Naive thymus-derived CD4-positive, alpha-beta T cell (primary cell): ENCODE measurements at regions of chr6 and their contacts with region 1.

Region 1: GRCh38 chr6:166419286-166419685 is 36.5 kb upstream of the MPC1 start:
- DNase-seq: peak in 2 of 9 donors; percentile 34 to 52
- ATAC-seq: peak; percentile 42
- H3K4me3 ChIP-seq: no peak overlapping the region
- H3K4me3 Mint-ChIP-seq: peak overlapping the region; percentile 4 to 79 (median 57)
- H3K27ac ChIP-seq: peak overlapping the region; percentile 50
- H3K27ac Mint-ChIP-seq: peak overlapping the region; percentile 83 to 99 (median 97)
- H3K4me1 ChIP-seq: peaks cover 63 to 66% of the 10 kb centered on the region in 2 donors
- H3K4me1 Mint-ChIP-seq: peaks cover 52 to 73% (median 64%) of the 10 kb centered on the region in 7 donors
- H3K27me3 ChIP-seq: no peaks in the 10 kb centered on the region
- H3K27me3 Mint-ChIP-seq: peaks cover 0 to 1% (median 0%) of the 10 kb centered on the region in 5 donors

Region 2: DNA sequence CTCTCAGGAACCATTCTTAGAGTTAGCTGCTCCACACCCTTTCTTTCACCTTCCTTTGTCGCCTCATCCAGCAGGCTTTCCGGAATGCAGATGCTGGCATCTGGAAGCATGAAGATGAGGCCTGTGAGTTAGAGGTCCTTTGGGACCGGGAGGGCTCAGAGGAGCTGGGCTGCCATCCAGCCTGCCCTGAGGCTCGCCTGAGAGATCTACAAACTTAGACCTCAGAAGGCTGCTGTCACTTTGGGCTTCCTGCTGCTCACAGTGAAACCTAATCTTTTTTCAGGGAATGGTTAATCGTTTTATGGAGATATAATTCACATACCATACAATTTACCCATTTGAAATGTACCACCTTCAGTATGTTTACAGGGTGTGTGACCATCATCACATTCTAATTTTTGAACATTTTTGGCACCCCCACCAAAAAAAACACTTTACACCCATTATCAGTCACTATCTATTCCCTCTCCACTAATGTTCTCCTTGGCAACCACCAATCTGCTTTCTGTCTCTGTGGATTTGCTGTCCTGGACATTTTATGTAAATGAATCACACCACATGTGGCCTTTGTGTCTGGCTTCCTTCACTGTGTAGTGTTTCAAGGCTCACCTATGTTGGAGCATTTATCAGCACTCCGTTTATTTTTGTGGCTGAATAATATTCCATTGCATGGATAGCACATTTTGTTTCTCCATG is 16.6 kb before region 1 on chr6:
- CTCF ChIA-PET with region 1: interaction called, 7 read pairs
- POLR2A ChIA-PET with region 1: interaction called, 4 read pairs
- intact Hi-C with region 1: loop called in 1 of 2 experiments (anchors 1 kb)
- DNase-seq: no peak
- ATAC-seq: no peak
- H3K4me3 ChIP-seq: no peak overlapping the region
- H3K4me3 Mint-ChIP-seq: no peak overlapping the region
- H3K27ac ChIP-seq: no peak overlapping the region
- H3K27ac Mint-ChIP-seq: peak overlapping the region in 5 of 9 donors; percentile 19 to 77 (median 54)
- H3K4me1 ChIP-seq: peaks cover 4 to 6% of the 10 kb centered on the region in 2 donors
- H3K4me1 Mint-ChIP-seq: peaks cover 0 to 7% (median 4%) of the 10 kb centered on the region in 7 donors
- H3K27me3 ChIP-seq: no peaks in the 10 kb centered on the region
- H3K27me3 Mint-ChIP-seq: peaks cover 0 to 6% (median 4%) of the 10 kb centered on the region in 5 donors

Region 3: DNA sequence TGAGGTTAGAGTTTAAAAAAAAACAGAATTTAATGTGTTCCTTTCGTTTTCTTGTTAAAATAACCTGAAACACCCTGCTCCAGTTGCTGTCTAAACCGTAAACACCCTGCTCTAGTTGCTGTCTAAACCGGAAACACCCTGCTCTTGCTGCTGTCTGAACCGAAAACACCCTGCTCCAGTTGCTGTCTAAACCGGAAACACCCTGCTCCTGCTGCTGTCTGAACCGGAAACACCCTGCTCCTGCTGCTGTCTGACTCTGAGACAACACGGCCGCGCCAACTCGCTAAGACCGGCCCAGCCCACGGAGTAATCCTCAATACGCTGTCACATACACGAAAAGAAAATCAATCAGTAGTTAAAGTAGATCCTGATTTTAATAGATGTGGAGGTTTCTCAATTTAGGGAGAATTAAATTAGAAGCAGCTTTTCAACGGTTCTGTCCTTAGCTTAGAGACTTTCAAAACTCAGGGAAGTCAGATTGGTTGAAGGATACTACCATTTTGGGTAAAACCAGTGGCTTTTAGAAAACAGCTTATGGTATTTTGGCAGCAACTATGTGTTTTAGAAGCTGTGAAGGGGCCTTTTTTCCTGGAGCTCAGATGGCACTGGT is 68.9 kb after region 1 on chr6:
- CTCF ChIA-PET with region 1: no interaction called
- POLR2A ChIA-PET with region 1: interaction called, 11 read pairs
- intact Hi-C with region 1: loop called (anchors 1 kb)
- DNase-seq: peak; percentile 37 to 90 (median 86)
- ATAC-seq: peak; percentile 94
- H3K4me3 ChIP-seq: peak overlapping the region; percentile 20
- H3K4me3 Mint-ChIP-seq: peak overlapping the region; percentile 43 to 84 (median 78)
- H3K27ac ChIP-seq: peak overlapping the region; percentile 79
- H3K27ac Mint-ChIP-seq: peak overlapping the region; percentile 93 to 98 (median 96)
- H3K4me1 ChIP-seq: peaks cover 17 to 18% of the 10 kb centered on the region in 2 donors
- H3K4me1 Mint-ChIP-seq: peaks cover 9 to 35% (median 27%) of the 10 kb centered on the region in 7 donors
- H3K27me3 ChIP-seq: no peaks in the 10 kb centered on the region
- H3K27me3 Mint-ChIP-seq: no peaks in the 10 kb centered on the region

Region 4: DNA sequence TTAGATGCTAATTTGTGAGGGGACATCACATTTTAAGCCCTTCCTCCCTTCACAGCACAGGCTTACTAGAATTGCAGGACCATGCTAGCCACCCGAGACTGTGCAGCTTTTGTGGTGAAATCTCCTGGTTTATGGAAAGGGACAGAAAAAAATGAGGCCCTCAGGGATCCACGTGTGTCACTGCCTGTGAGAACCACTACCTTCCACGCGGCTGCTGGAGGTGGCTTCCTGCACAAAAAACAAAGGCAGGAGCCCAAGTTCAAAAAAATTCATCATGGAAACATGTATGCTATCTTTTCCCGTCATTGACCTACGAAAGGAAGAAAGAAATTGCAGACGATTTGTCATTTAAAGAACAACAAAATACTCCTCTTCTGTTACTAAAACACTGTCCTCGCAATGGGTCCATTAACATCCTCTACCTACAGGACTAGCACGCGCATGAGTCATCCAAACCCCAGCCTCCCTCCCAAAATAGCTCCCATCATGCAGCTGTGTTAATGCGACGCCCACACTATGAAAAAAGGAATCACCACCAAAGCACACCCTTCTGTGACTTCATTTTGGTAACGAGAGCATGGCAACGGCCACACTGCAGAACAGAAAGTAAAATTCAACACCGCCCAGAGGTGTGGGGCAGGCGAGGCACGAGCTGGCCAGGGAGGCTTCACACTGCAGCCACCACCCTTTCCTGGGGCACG is 121.5 kb after region 1 on chr6:
- CTCF ChIA-PET with region 1: no interaction called
- POLR2A ChIA-PET with region 1: no interaction called
- intact Hi-C with region 1: loop called in 1 of 2 experiments (anchors 1 kb)
- DNase-seq: peak in 7 of 9 donors; percentile 3 to 48 (median 25)
- ATAC-seq: peak; percentile 87
- H3K4me3 ChIP-seq: peak overlapping the region; percentile 22
- H3K4me3 Mint-ChIP-seq: peak overlapping the region in 9 of 10 donors; percentile 22 to 78 (median 76)
- H3K27ac ChIP-seq: peak overlapping the region; percentile 50
- H3K27ac Mint-ChIP-seq: peak overlapping the region in 8 of 9 donors; percentile 12 to 89 (median 84)
- H3K4me1 ChIP-seq: peaks cover 13 to 14% of the 10 kb centered on the region in 2 donors
- H3K4me1 Mint-ChIP-seq: peaks cover 16 to 38% (median 28%) of the 10 kb centered on the region in 7 donors
- H3K27me3 ChIP-seq: no peaks in the 10 kb centered on the region
- H3K27me3 Mint-ChIP-seq: no peaks in the 10 kb centered on the region

Region 5: DNA sequence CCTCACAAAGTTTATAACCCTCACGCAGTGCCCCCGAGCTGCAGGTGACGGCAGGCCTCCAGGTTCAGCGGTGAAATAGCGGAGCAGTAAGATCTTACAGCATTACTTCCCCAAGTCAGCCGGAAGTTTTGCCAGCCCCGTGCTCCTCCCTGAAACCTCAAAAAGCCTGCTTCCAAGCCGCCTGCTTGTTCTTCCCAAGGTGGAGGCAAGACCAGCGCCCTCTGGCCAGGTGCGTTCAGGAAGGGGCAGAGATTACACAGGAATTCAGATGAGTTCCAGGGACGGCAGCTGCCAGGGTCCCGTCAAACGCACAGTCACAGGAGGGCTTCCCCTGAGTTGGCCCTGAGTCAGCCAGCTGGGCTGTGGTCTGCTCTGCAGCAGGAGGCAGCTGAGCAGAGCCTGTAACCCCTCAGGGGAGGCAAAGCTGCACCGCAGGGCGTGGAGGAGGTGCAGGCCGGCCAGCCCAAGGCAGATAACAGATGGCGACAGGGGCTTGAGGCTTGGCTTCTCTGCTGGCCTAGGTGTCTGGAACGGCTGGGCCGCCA is 331.8 kb after region 1 on chr6:
- CTCF ChIA-PET with region 1: no interaction called
- POLR2A ChIA-PET with region 1: no interaction called
- intact Hi-C with region 1: loop called in 1 of 2 experiments (anchors 10 kb)
- DNase-seq: peak in 3 of 9 donors; percentile 23 to 26 (median 24)
- ATAC-seq: peak; percentile 73
- H3K4me3 ChIP-seq: no peak overlapping the region
- H3K4me3 Mint-ChIP-seq: peak overlapping the region in 8 of 10 donors; percentile 3 to 69 (median 52)
- H3K27ac ChIP-seq: no peak overlapping the region
- H3K27ac Mint-ChIP-seq: peak overlapping the region in 3 of 9 donors; percentile 8 to 64 (median 45)
- H3K4me1 ChIP-seq: peaks cover 0 to 4% of the 10 kb centered on the region in 2 donors
- H3K4me1 Mint-ChIP-seq: peaks cover 0 to 21% (median 8%) of the 10 kb centered on the region in 7 donors
- H3K27me3 ChIP-seq: no peaks in the 10 kb centered on the region
- H3K27me3 Mint-ChIP-seq: peaks cover 0 to 11% (median 3%) of the 10 kb centered on the region in 5 donors